H1 (cell line): ENCODE measurements at regions of chr2 and their contacts with region 1.

Region 1: GRCh38 chr2:120820263-120820952 is 84.7 kb downstream of the GLI2 start:
- DNase-seq: no peak
- H3K4me3 ChIP-seq: no peak overlapping the region
- H3K27ac ChIP-seq: no peak overlapping the region
- H3K4me1 ChIP-seq: peaks cover 0 to 23% (median 16%) of the 10 kb centered on the region in 4 experiments; a peak in 6 of 7 replicates
- H3K27me3 ChIP-seq: no peaks in the 10 kb centered on the region
- CTCF ChIP-seq: no peak
- EP300 ChIP-seq: no peak
- POLR2A ChIP-seq: no peak
- RAD21 ChIP-seq: no peak

Region 2: GRCh38 chr2:120596990-120597594 is 223.3 kb before region 1 on chr2:
- CTCF ChIA-PET with region 1: no interaction called
- POLR2A ChIA-PET with region 1: no interaction called
- DNase-seq: no peak
- H3K4me3 ChIP-seq: no peak overlapping the region
- H3K27ac ChIP-seq: no peak overlapping the region
- H3K4me1 ChIP-seq: peaks cover 4 to 15% (median 10%) of the 10 kb centered on the region in 4 experiments
- H3K27me3 ChIP-seq: peaks cover 0 to 7% (median 1%) of the 10 kb centered on the region in 4 experiments; a peak in 2 of 7 replicates
- CTCF ChIP-seq: no peak
- EP300 ChIP-seq: no peak
- POLR2A ChIP-seq: no peak
- RAD21 ChIP-seq: no peak

Region 3: DNA sequence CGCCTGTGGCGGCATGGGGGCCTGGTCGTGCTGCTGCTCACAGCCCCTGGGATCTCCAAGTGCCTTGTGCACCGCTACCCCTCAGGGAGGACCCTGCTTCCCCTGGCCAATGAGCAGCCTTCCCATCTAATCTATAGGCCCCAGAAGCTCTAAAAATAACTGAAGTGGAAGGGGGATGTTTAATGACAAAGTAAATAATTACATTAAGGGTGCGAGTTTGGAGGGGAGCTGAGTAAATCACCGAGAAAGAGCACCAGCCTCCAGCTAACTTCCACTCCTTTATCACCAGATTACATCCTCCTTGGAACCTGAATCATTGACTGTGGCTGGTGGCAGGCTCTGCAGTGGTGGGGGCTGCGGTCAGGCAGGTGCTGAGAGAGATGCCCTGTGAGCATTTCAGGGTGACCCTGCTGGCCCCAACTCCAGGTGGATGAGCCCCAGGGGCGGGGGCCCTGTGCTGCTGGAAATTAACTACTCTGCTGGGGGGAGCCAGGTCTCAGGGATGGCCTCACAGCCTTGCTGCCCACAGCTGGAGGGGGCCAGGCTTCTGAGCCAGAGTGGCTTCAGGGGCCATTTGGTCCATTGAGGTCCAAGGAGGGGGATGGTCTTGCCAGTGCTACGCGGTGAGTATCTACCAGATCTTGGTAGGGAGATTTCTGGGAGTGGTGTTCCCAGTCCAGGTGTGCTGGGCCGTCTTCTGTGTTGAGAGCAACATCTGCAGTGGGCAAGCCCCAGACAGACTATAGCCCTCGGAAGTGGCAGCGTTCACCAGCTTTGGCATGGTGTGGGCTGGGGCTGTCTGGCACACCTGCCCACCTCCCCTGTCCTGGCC is 10.6 kb before region 1 on chr2:
- CTCF ChIA-PET with region 1: interaction called, 10 read pairs
- POLR2A ChIA-PET with region 1: interaction called, 4 read pairs
- DNase-seq: no peak
- H3K4me3 ChIP-seq: no peak overlapping the region
- H3K27ac ChIP-seq: no peak overlapping the region
- H3K4me1 ChIP-seq: no peaks in the 10 kb centered on the region
- H3K27me3 ChIP-seq: no peaks in the 10 kb centered on the region; a peak in 1 of 7 replicates
- CTCF ChIP-seq: no peak
- EP300 ChIP-seq: no peak
- POLR2A ChIP-seq: no peak
- RAD21 ChIP-seq: no peak

Region 4: DNA sequence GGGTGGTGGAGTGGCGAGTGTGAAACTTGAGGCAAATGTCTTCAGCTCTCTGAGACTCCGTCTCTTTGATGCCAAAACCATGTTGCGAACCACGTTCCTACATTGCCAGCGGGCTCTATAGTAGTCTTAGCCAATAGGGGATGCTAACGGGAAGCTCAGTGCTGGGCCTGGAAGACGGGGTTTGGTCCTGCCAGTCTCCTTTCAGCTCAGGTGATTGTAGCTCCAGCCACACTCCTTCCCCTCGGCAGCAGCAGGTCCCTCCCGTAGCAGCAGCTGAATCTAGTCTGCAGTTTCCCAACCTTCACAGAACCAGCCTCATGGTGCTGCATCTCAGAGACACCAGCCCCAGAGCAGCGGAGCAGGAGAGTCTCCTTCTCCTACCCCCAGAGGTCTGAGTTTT is 354.9 kb after region 1 on chr2:
- CTCF ChIA-PET with region 1: no interaction called
- POLR2A ChIA-PET with region 1: no interaction called
- DNase-seq: peak in 1 of 2 experiments; percentile 10
- H3K4me3 ChIP-seq: no peak overlapping the region
- H3K27ac ChIP-seq: no peak overlapping the region
- H3K4me1 ChIP-seq: no peaks in the 10 kb centered on the region; a peak in 1 of 7 replicates
- H3K27me3 ChIP-seq: no peaks in the 10 kb centered on the region; a peak in 3 of 7 replicates
- CTCF ChIP-seq: no peak
- EP300 ChIP-seq: no peak
- POLR2A ChIP-seq: no peak
- RAD21 ChIP-seq: peak in 1 of 2 experiments; percentile 33; a peak in 2 of 4 replicates